Left ventricle myocardium inferior (tissue), 1 donor: ENCODE measurements at regions of chrX and their contacts with region 1.

Region 1: DNA sequence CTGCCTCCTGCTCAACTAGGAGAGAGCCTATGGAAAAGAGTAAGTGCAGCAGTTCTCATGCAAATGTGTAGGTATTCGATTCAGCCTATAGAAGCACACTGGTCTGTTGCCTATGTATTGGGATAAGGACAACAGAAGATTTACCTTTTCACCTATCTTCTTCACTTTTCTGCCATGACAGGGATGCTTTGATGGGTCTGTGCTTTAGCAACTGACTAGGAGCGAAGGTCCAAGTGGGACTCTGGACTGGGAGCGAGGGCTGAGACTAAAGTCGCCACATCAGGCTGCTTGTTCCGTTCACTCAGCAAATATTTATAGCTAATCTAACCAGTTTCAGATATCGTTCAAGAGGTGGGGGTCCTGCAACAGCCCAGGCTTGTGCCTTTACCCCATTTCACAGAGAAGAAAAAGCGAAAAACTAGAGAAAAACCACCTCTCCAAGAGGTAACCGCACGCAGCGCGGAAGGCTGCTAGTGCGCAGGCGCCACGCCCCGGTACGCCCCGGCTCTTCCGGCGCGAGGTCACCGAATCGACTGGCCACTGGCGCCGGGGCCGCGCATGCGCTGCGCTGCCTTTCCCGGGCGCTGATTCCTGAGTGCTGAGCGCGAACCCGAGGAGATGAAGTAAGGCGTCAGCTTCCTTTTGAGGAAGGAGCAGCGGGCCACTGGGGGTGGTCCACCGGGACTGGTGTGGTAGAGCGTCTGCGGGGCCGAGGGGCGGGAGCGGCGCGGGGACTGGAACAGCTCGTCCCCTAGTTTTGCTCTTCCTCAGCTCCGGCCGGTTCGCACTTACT is at the start of gene RBMX2:
- DNase-seq: peak; percentile 73
- H3K4me3 ChIP-seq: peak within 1 kb of the TSS; percentile 78
- H3K27ac ChIP-seq: peak within 1 kb of the TSS; percentile 83
- H3K4me1 ChIP-seq: peaks cover 24% of the 10 kb centered on the region
- H3K27me3 ChIP-seq: no peaks in the 10 kb centered on the region
- CTCF ChIP-seq: no peak
- total RNA-seq, gene RBMX2: 11.6 TPM

Region 2: DNA sequence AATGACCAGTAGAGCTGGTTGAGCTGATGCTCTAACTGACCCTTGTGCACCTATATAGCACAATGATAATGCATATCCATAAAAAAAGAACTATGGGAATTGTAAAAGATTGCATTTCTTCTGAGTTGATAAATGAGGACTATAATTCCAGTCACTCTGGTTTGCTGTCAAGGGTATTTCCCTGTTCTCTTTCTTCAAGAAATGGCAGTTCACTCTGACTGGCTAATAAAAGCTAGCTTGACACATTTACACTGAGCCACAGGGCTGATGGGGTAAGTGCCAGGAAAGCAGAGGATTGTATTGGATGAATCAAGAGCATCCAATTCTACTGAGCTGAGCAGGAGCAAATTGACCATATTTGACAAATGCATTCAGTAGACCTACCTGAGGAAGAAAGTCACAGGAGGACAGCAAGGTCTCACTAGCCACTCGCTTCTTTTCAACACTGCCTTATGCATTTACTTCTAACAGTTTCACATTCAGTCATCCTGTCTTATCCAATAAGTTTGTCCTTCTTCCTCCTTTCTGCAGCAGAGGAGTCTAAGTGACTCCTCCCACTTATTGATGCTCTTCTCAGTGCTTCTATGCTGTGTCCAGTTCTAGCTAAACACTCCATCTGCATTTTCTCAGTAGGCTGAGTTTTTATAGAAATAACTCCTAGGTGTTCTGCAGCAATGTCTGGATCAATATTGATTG is 43.2 kb after region 1 on chrX:
- intact Hi-C with region 1: no loop called
- DNase-seq: no peak
- H3K4me3 ChIP-seq: no peak overlapping the region
- H3K27ac ChIP-seq: no peak overlapping the region
- H3K4me1 ChIP-seq: no peaks in the 10 kb centered on the region
- H3K27me3 ChIP-seq: no peaks in the 10 kb centered on the region
- CTCF ChIP-seq: no peak

Region 3: GRCh38 chrX:130902783-130903613 is 501.4 kb after region 1 on chrX and contains the start of gene ENOX2:
- intact Hi-C with region 1: loop called (anchors 10 kb)
- DNase-seq: peak; percentile 89
- H3K4me3 ChIP-seq: peak within 1 kb of the TSS; percentile 74
- H3K27ac ChIP-seq: peak within 1 kb of the TSS; percentile 93
- H3K4me1 ChIP-seq: peaks cover 8% of the 10 kb centered on the region
- H3K27me3 ChIP-seq: no peaks in the 10 kb centered on the region
- CTCF ChIP-seq: peak; percentile 25
- total RNA-seq, gene ENOX2: 14.1 TPM